Naive thymus-derived CD8-positive, alpha-beta T cell (primary cell): ENCODE measurements at regions of chr7 and their contacts with region 1.

Region 1: GRCh38 chr7:142811154-142811737 is 40.5 kb downstream of the PRSS2 start:
- DNase-seq: peak in 8 of 10 donors; percentile 44 to 83 (median 68)
- ATAC-seq: no peak
- H3K4me3 Mint-ChIP-seq: peak overlapping the region; percentile 2 to 93 (median 62)
- H3K27ac Mint-ChIP-seq: peak overlapping the region; percentile 94 to 100 (median 100)
- H3K4me1 Mint-ChIP-seq: peaks cover 51 to 86% (median 84%) of the 10 kb centered on the region in 4 donors
- H3K27me3 Mint-ChIP-seq: peaks cover 0 to 2% (median 0%) of the 10 kb centered on the region in 5 donors

Region 2: DNA sequence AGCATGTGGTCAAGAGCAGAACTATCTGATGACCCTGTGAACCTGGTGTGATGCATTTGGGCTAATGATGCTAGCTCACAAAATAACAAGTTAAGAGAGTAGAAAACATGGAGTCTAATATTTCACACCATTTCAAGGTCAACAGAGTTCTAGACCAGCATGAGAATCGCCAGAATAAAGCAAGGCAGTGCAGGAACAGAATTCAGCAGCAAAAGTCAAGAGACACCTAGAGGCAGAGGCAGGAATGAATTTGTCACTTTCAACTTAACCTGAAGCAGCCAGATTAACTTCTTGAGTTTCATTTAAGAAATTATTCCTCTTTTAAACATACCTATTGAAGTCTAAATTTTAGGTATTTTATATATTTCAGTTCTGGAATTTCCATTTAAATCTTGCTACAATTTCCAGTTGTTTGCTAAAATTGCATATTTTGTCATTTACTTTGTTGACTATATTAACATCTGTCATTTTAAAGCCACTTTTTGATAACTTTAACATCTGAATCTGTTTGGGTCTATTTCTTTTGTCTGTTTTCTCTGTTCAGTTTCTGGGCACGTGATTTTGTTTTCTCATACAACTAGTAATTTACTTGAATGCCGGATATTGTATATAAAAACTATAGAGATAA is 509.2 kb before region 1 on chr7:
- POLR2A ChIA-PET with region 1: interaction called, 39 read pairs
- DNase-seq: no peak
- ATAC-seq: peak in 1 of 2 donors; percentile 26
- H3K4me3 Mint-ChIP-seq: peak overlapping the region in 1 of 10 donors; percentile 24
- H3K27ac Mint-ChIP-seq: no peak overlapping the region
- H3K4me1 Mint-ChIP-seq: peaks cover 15 to 36% (median 27%) of the 10 kb centered on the region in 4 donors
- H3K27me3 Mint-ChIP-seq: peaks cover 6 to 27% (median 8%) of the 10 kb centered on the region in 5 donors

Region 3: GRCh38 chr7:142313528-142313927 is 497.7 kb before region 1 on chr7:
- POLR2A ChIA-PET with region 1: interaction called, 24 read pairs
- DNase-seq: peak in 5 of 10 donors; percentile 26 to 70 (median 43)
- ATAC-seq: peak; percentile 79 to 90
- H3K4me3 Mint-ChIP-seq: peak overlapping the region; percentile 15 to 72 (median 60)
- H3K27ac Mint-ChIP-seq: peak overlapping the region in 8 of 10 donors; percentile 2 to 87 (median 44)
- H3K4me1 Mint-ChIP-seq: peaks cover 12 to 17% (median 16%) of the 10 kb centered on the region in 4 donors
- H3K27me3 Mint-ChIP-seq: peaks cover 4 to 48% (median 12%) of the 10 kb centered on the region in 5 donors

Region 4: DNA sequence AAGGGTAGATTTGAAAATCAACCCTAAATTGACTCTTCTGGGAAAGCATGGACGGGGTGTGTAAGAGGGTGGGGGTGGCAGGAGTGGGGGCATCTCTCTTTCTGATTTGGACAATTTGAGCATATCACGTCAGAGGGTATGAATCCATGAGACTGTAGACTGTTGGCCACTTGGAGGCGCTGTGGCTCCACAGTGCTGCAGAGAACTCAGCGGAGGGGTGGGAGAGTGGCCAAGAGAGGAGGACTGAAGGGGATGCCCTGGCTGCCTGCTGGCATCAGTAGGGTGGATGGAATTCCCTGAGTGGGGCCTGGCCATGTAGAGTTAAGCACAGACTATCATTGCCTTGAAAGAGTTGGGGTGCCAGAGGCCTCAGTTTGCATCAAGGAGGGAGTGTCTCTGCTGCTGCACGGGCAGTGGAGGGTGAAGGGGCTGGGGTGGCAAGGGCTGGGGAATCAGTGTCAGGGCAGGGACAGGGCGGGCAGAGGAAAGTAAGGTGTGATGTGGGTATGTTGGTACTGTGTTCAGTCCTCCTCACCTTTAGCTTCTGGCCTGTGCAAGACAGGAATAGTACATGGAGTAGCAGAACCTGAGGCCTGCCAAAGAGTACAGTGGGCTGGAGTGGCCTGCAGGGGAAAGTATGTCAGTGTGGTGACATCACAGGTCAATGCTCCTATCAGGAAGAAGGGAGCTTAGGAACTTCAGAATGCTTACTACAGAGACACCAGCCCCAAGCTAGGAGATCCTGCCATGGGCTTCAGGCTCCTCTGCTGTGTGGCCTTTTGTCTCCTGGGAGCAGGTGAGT is 419.9 kb before region 1 on chr7:
- POLR2A ChIA-PET with region 1: interaction called, 20 read pairs
- DNase-seq: peak in 9 of 10 donors; percentile 20 to 67 (median 40)
- ATAC-seq: peak; percentile 83 to 85
- H3K4me3 Mint-ChIP-seq: peak overlapping the region; percentile 29 to 84 (median 63)
- H3K27ac Mint-ChIP-seq: peak overlapping the region; percentile 25 to 71 (median 61)
- H3K4me1 Mint-ChIP-seq: peaks cover 0 to 7% (median 3%) of the 10 kb centered on the region in 4 donors
- H3K27me3 Mint-ChIP-seq: peaks cover 0 to under 1% (median 0%) of the 10 kb centered on the region in 5 donors

Region 5: GRCh38 chr7:142535123-142535779 is 276.0 kb before region 1 on chr7:
- POLR2A ChIA-PET with region 1: interaction called, 25 read pairs
- DNase-seq: peak; percentile 44 to 80 (median 58)
- ATAC-seq: peak; percentile 80 to 85
- H3K4me3 Mint-ChIP-seq: peak overlapping the region; percentile 44 to 82 (median 72)
- H3K27ac Mint-ChIP-seq: peak overlapping the region; percentile 63 to 91 (median 80)
- H3K4me1 Mint-ChIP-seq: peaks cover 5 to 31% (median 23%) of the 10 kb centered on the region in 4 donors
- H3K27me3 Mint-ChIP-seq: no peaks in the 10 kb centered on the region

Region 6: DNA sequence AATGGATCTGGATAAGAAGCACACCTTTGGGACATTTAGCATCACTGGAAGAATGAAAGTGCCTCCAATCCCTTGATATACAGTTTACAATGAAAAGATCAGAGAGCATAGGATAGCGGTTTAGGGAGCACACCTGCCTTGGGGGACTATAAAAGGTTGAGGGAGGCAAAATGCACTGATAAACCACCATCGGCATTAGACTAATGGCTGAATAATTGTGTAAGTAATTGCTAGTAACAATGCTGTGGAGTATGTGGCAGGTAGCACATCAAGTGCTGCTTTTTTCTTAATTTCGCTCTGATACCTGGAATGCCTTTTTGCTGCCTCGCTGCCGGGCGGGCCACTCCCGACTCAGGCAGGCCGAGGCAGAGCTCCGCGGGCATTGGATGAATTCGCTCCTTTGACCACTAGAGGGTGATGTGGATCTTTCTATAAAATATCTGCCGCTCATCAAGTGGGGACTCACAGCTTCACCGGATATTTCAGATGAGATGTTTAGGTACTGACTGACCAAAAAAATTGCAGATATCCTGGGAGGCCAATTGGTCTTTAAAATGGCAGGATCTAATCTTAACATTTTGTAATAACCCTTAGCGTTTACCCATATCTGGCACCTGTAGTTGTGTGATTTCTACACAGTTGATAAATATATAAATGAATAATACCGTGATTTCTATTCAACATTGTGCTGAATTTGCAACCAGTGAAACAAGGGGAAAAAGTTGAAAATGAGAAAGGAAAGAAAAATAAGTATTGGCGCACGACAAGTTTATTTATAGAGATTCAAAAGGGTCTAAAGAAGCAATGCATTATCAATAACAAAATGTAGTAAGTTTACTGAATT is 178.7 kb before region 1 on chr7:
- POLR2A ChIA-PET with region 1: interaction called, 31 read pairs
- DNase-seq: peak; percentile 29 to 76 (median 60)
- ATAC-seq: peak; percentile 36 to 65
- H3K4me3 Mint-ChIP-seq: peak overlapping the region in 3 of 10 donors; percentile 20 to 64 (median 34)
- H3K27ac Mint-ChIP-seq: peak overlapping the region in 7 of 10 donors; percentile 58 to 91 (median 71)
- H3K4me1 Mint-ChIP-seq: peaks cover 4 to 19% (median 9%) of the 10 kb centered on the region in 4 donors
- H3K27me3 Mint-ChIP-seq: peaks cover 0 to 6% (median 1%) of the 10 kb centered on the region in 5 donors

Region 7: GRCh38 chr7:142782922-142783900 is 28.0 kb before region 1 on chr7:
- POLR2A ChIA-PET with region 1: interaction called, 3,070 read pairs
- DNase-seq: peak; percentile 61 to 90 (median 75)
- ATAC-seq: peak; percentile 23 to 38
- H3K4me3 Mint-ChIP-seq: peak overlapping the region; percentile 70 to 87 (median 84)
- H3K27ac Mint-ChIP-seq: peak overlapping the region; percentile 85 to 100 (median 99)
- H3K4me1 Mint-ChIP-seq: peaks cover 2 to 34% (median 7%) of the 10 kb centered on the region in 4 donors
- H3K27me3 Mint-ChIP-seq: no peaks in the 10 kb centered on the region